ENCODE measurements at regions of chr10 and their contacts with region 1.

Region 1: GRCh38 chr10:116742367-116743265 is at the start of gene HSPA12A:
- DNase-seq: peak; percentile 86
- H3K4me3 ChIP-seq: peak within 1 kb of the TSS; percentile 61 to 98 (median 85)
- H3K27ac ChIP-seq: peak within 1 kb of the TSS; percentile 90 to 98 (median 96)
- H3K4me1 ChIP-seq: peaks cover 0 to 21% (median 11%) of the 10 kb centered on the region in 4 donors
- H3K27me3 ChIP-seq: no peaks in the 10 kb centered on the region
- CTCF ChIP-seq: peak in 2 of 4 experiments; percentile 15 to 30
- EP300 ChIP-seq: no peak
- POLR2A ChIP-seq: no peak
- total RNA-seq, gene HSPA12A: 12.3 to 17.4 (median 15.4) TPM

Region 2: GRCh38 chr10:116683821-116684220 is 58.8 kb before region 1 on chr10:
- intact Hi-C with region 1: loop called (anchors 2 kb)
- DNase-seq: no peak
- H3K4me3 ChIP-seq: no peak overlapping the region
- H3K27ac ChIP-seq: no peak overlapping the region
- H3K4me1 ChIP-seq: peaks cover 0 to 20% (median 8%) of the 10 kb centered on the region in 4 donors
- H3K27me3 ChIP-seq: no peaks in the 10 kb centered on the region
- CTCF ChIP-seq: no peak
- EP300 ChIP-seq: no peak
- POLR2A ChIP-seq: no peak

Region 3: GRCh38 chr10:116691635-116692034 is 51.0 kb before region 1 on chr10:
- intact Hi-C with region 1: loop called (anchors 2 kb)
- DNase-seq: peak; percentile 72
- H3K4me3 ChIP-seq: no peak overlapping the region
- H3K27ac ChIP-seq: peak overlapping the region; percentile 1 to 50 (median 48)
- H3K4me1 ChIP-seq: peaks cover 0 to 48% (median 22%) of the 10 kb centered on the region in 4 donors
- H3K27me3 ChIP-seq: no peaks in the 10 kb centered on the region
- CTCF ChIP-seq: no peak
- EP300 ChIP-seq: no peak
- POLR2A ChIP-seq: no peak

Region 4: DNA sequence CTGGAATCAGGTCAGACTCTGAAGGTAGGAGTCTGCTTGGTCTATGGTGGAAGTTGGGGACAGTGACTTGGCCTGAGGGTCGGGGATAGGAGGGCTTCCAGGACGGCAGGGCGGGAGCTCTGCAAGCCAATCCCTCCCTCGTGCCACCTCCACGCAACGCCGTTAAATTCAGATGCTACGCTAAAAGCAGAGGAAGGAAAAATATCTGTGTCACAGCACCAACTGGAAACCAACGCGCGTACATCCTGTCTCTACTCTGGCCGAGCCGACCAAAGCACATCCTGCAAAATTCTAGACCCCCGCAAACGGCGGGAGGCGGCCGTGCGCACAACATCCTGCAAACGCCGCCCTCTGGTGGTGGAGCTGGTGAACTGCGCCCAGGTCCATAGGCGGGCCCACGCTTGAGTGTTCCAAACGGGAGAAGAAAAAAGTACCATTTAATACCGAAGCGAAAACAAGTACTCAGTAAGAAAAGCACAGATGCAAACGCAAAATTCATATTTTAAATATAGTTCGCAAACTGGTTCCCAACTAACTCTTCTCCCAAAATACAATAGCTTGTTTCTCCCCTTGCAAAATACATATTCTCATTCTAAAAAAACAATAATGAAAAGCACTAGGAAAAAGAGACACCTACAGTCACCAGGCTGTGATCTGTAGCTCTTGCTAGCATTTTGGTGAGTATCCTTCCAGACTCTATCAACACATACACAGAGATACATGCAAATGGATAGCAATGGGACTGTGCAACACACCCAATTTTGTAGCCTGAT is 45.5 kb after region 1 on chr10:
- intact Hi-C with region 1: loop called (anchors 5 kb)
- DNase-seq: peak; percentile 88
- H3K4me3 ChIP-seq: peak overlapping the region in 3 of 4 donors; percentile 17 to 27 (median 18)
- H3K27ac ChIP-seq: no peak overlapping the region
- H3K4me1 ChIP-seq: peaks cover 0 to 5% (median 2%) of the 10 kb centered on the region in 4 donors
- H3K27me3 ChIP-seq: no peaks in the 10 kb centered on the region
- CTCF ChIP-seq: peak; percentile 91 to 100 (median 93)
- EP300 ChIP-seq: no peak
- POLR2A ChIP-seq: no peak

Region 5: DNA sequence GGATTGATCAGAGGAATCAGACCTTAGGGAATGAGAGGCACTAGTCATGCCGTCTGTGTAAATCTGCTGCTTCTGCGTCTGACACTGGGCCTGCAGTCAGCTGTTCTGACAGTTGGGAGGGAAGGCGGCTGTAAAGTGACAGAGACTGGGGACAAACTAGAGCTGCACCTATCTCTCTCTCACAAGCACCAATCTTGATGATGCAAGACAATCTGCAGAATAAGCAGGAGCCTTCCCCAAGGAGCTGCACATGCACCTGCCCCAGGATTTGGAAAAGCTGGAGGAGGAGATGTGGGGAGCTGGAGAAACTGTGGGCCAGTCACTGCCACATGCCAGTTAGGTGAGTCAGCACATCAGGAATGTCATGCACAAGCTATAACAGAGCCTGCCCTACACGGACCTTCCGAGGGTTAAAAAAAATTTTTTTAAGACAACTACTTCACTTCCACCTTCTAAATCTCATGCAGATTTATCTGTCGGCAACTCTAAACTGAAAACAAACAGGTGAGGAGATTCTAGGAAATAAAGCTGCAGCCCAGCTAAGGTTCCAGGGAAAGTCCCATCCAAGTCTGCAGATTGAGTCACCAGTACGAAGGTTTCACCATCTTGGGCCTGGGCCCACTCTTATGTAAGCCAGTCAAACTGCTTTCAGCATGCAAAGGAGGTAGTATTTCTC is 145.9 kb after region 1 on chr10:
- intact Hi-C with region 1: no loop called
- DNase-seq: peak; percentile 78
- H3K4me3 ChIP-seq: no peak overlapping the region
- H3K27ac ChIP-seq: no peak overlapping the region
- H3K4me1 ChIP-seq: peaks cover 0 to 19% (median 14%) of the 10 kb centered on the region in 4 donors
- H3K27me3 ChIP-seq: no peaks in the 10 kb centered on the region
- CTCF ChIP-seq: no peak
- EP300 ChIP-seq: no peak
- POLR2A ChIP-seq: no peak

Region 6: GRCh38 chr10:117375360-117376178 is 633.0 kb after region 1 on chr10 and contains the start of gene PDZD8:
- intact Hi-C with region 1: loop called (anchors 10 kb)
- DNase-seq: peak; percentile 97
- H3K4me3 ChIP-seq: peak within 1 kb of the TSS; percentile 69 to 94 (median 85)
- H3K27ac ChIP-seq: peak within 1 kb of the TSS; percentile 89 to 99 (median 96)
- H3K4me1 ChIP-seq: peaks cover 0 to 51% (median 27%) of the 10 kb centered on the region in 4 donors
- H3K27me3 ChIP-seq: no peaks in the 10 kb centered on the region
- CTCF ChIP-seq: no peak
- EP300 ChIP-seq: peak in 1 of 4 donors; percentile 10
- POLR2A ChIP-seq: peak; percentile 80 to 81
- total RNA-seq, gene PDZD8: 25.2 to 34.3 (median 30.7) TPM

Measured in sigmoid colon (tissue), 7 donors.